H1 (cell line): ENCODE measurements at regions of chr19 and their contacts with region 1.

Region 1: GRCh38 chr19:29761575-29762232 is 46.6 kb upstream of the C19orf12 start:
- DNase-seq: no peak
- H3K4me3 ChIP-seq: no peak overlapping the region
- H3K27ac ChIP-seq: no peak overlapping the region
- H3K4me1 ChIP-seq: no peaks in the 10 kb centered on the region; a peak in 1 of 7 replicates
- H3K27me3 ChIP-seq: no peaks in the 10 kb centered on the region; a peak in 1 of 7 replicates
- CTCF ChIP-seq: no peak
- EP300 ChIP-seq: no peak
- POLR2A ChIP-seq: no peak
- RAD21 ChIP-seq: no peak

Region 2: GRCh38 chr19:29771708-29772414 is 10.2 kb after region 1 on chr19:
- CTCF ChIA-PET with region 1: interaction called, 103 read pairs
- POLR2A ChIA-PET with region 1: no interaction called
- DNase-seq: peak; percentile 41 to 78
- H3K4me3 ChIP-seq: no peak overlapping the region
- H3K27ac ChIP-seq: no peak overlapping the region
- H3K4me1 ChIP-seq: peaks cover 0 to 6% (median 3%) of the 10 kb centered on the region in 4 experiments; a peak in 4 of 7 replicates
- H3K27me3 ChIP-seq: no peaks in the 10 kb centered on the region
- CTCF ChIP-seq: peak; percentile 72 to 90 (median 77)
- EP300 ChIP-seq: no peak
- POLR2A ChIP-seq: no peak
- RAD21 ChIP-seq: peak; percentile 45 to 65

Region 3: DNA sequence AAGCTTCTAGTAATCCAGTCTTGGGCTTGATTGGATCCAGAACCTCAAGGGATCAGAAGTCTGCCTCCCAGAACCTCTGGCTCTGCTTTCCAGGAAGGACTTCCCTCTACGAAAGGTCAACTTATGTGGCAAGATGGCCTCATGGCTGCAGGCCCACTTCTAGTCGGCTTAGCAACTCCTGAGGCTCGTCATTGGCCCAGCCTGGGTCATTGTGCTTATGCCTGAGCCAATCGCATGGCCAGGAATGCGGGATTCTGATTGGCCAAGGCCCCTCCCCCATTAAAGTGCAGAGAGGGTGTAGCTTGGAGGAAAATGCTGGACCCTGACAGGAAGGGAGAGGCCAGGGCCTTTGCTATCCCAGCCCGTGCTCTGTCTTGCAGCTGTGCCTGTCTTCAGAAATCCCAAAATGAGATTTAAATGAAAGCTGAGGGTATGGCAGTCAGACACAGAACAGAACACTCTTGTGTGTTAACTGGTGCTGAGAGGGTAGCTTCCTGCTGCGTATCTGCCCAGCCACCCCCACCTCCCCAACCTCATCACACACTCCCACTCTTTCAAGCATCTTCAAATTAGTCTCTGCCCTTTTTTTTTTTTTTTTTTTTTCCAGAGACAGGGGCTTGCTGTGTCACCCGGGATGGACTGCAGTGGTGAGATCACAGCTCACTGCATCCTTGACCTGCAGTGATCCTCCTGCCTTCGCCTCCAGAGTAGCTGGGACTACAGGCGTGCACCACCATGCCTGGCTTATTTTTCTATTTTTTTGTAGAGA is 44.6 kb after region 1 on chr19:
- CTCF ChIA-PET with region 1: interaction called, 11 read pairs
- POLR2A ChIA-PET with region 1: no interaction called
- DNase-seq: peak in 1 of 2 experiments; percentile 56
- H3K4me3 ChIP-seq: no peak overlapping the region
- H3K27ac ChIP-seq: no peak overlapping the region
- H3K4me1 ChIP-seq: peaks cover 0 to 4% (median 2%) of the 10 kb centered on the region in 4 experiments; a peak in 2 of 7 replicates
- H3K27me3 ChIP-seq: no peaks in the 10 kb centered on the region
- CTCF ChIP-seq: no peak
- EP300 ChIP-seq: no peak
- POLR2A ChIP-seq: no peak
- RAD21 ChIP-seq: no peak